ENCODE measurements at regions of chr5 and their contacts with region 1.

Region 1: DNA sequence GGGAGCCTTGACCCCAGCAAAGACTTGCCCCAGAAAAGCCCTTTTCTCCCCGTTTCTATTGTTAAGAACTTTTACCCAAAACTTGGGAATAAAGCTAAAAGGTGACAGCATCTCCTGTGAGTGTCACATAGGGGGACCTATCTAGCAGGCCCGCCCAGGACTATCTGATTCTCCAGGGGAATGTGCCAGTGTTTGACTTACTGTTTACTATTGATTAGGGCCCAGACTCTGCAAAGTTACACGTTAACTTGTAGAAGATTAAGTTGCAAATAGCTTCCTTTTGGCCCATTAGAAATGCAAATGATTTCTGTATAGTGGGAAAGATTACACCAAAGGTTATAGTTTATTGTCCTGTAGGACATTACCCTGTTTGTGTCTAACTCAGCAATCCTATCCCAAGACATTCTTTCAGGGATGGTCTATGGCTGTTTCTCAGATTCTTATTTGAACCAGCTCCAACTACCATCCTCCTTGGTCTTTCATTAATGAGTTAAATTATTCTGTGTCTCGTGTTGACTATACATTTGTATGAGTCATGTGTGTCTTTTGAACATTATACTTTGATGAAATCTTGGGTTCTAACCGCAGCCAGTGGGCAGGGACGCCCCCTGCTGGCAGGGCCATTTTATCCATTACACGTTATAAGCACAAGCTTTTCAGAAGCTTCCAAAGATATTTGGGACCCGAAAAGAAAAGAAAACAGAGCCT is 60.7 kb downstream of the HRH2 start:
- DNase-seq: no peak
- H3K4me3 ChIP-seq: no peak overlapping the region
- CTCF ChIP-seq: no peak

Region 2: DNA sequence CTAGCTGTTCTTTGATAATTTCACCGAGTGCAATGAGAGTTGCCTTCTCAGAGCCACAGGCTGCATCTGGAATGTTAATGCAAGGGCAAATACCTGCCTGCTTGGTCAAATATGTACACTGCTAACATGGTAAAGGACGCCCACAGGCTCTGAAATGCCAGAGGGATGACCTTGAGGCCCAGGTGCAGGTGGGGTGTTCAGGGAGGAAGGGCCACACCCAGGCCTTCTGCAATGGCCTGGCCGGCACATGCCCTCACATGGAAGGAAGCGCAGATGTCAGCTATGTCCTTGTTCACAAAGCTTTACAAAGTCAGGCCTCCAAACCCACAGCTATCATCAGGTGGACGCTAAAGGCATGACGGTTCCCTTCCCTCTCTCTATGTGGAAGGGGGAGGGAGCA is 12.1 kb before region 1 on chr5:
- CTCF ChIA-PET with region 1: interaction called, 11 read pairs
- POLR2A ChIA-PET with region 1: no interaction called
- DNase-seq: no peak
- H3K4me3 ChIP-seq: no peak overlapping the region
- CTCF ChIP-seq: no peak

Region 3: GRCh38 chr5:175729829-175730277 is 11.3 kb after region 1 on chr5:
- CTCF ChIA-PET with region 1: interaction called, 38 read pairs
- POLR2A ChIA-PET with region 1: no interaction called
- DNase-seq: peak; percentile 29
- H3K4me3 ChIP-seq: no peak overlapping the region
- CTCF ChIP-seq: peak; percentile 97

Region 4: GRCh38 chr5:175743676-175744210 is 25.2 kb after region 1 on chr5:
- CTCF ChIA-PET with region 1: no interaction called
- POLR2A ChIA-PET with region 1: no interaction called
- DNase-seq: no peak
- H3K4me3 ChIP-seq: no peak overlapping the region
- CTCF ChIP-seq: no peak